Ascending aorta (tissue), 2 donors: ENCODE measurements at regions of chr6 and their contacts with region 1.

Region 1: GRCh38 chr6:43516697-43517504 is at the starts of genes POLR1C and YIPF3:
- DNase-seq: peak; percentile 89 to 98
- H3K4me3 ChIP-seq: peak within 1 kb of the TSS; percentile 81 to 95
- H3K27ac ChIP-seq: peak within 1 kb of the TSS; percentile 82 to 87
- H3K4me1 ChIP-seq: peaks cover 11 to 24% of the 10 kb centered on the region in 2 donors
- H3K27me3 ChIP-seq: no peaks in the 10 kb centered on the region
- CTCF ChIP-seq: no peak
- total RNA-seq, gene POLR1C: 51.5 TPM
- total RNA-seq, gene YIPF3: 71.4 TPM

Region 2: GRCh38 chr6:41920921-41921711 is 1595.8 kb before region 1 on chr6 and contains the starts of genes BYSL and MED20:
- intact Hi-C with region 1: loop called (anchors 10 kb)
- DNase-seq: peak; percentile 69 to 95
- H3K4me3 ChIP-seq: peak within 1 kb of the TSS; percentile 92 to 97
- H3K27ac ChIP-seq: peak within 1 kb of the TSS; percentile 98 to 99
- H3K4me1 ChIP-seq: peaks cover 8 to 19% of the 10 kb centered on the region in 2 donors
- H3K27me3 ChIP-seq: no peaks in the 10 kb centered on the region
- CTCF ChIP-seq: peak; percentile 94 to 97 (median 96)
- total RNA-seq, gene BYSL: 1.6 TPM
- total RNA-seq, gene MED20: 13.5 TPM

Region 3: GRCh38 chr6:42217519-42218367 is 1299.2 kb before region 1 on chr6 and contains the start of gene MRPS10:
- intact Hi-C with region 1: loop called (anchors 10 kb)
- DNase-seq: peak; percentile 66 to 96
- H3K4me3 ChIP-seq: peak within 1 kb of the TSS; percentile 59 to 80
- H3K27ac ChIP-seq: peak within 1 kb of the TSS; percentile 61 to 72
- H3K4me1 ChIP-seq: peaks cover 3 to 4% of the 10 kb centered on the region in 2 donors
- H3K27me3 ChIP-seq: no peaks in the 10 kb centered on the region
- CTCF ChIP-seq: no peak
- total RNA-seq, gene MRPS10: 5.4 TPM

Region 4: GRCh38 chr6:43174263-43175112 is 342.4 kb before region 1 on chr6:
- intact Hi-C with region 1: loop called (anchors 5 kb)
- DNase-seq: peak; percentile 98 to 99
- H3K4me3 ChIP-seq: peak overlapping the region; percentile 88 to 95
- H3K27ac ChIP-seq: peak overlapping the region; percentile 98
- H3K4me1 ChIP-seq: peaks cover 8 to 30% of the 10 kb centered on the region in 2 donors
- H3K27me3 ChIP-seq: no peaks in the 10 kb centered on the region
- CTCF ChIP-seq: peak in 1 of 3 experiments; percentile 16

Region 5: DNA sequence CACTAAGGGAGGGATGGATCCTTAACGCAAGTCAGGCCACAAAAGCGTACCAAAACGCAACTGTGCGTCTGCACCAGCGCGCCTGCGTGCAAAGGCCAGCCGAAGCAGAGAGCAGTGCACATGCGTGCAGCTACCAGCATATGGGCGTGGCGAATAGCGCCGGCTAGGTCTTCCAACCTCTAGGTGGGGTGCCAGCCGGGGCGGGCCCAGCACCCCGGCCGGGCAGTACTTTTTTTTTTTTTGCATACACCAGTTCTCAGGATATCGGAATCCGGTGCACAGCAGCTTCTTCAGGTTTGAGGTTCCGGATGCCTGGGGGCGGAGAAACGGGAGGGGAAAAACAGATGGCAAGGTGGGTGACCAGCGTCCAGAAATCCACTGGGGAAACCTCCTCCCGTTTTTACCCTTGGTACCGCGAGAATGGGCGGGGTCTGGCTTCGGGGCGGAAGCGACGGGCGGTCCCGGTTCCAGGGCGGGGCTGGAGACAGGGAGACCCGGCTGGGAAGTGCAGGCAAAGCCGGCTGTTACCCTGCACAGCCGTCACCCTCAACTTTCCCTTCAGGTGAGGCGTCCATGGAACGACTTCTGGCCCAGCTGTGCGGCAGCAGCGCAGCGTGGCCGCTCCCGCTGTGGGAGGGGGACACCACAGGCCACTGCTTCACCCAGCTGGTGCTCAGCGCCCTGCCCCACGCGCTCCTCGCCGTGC is 89.3 kb before region 1 on chr6 and contains the start of gene ABCC10:
- intact Hi-C with region 1: loop called (anchors 2 kb)
- DNase-seq: peak; percentile 72 to 96
- H3K4me3 ChIP-seq: peak within 1 kb of the TSS; percentile 79 to 89
- H3K27ac ChIP-seq: peak within 1 kb of the TSS; percentile 80 to 87
- H3K4me1 ChIP-seq: peaks cover 3 to 17% of the 10 kb centered on the region in 2 donors
- H3K27me3 ChIP-seq: no peaks in the 10 kb centered on the region
- CTCF ChIP-seq: peak in 2 of 3 experiments; percentile 40 to 44
- total RNA-seq, gene ABCC10: 4.6 TPM

Region 6: GRCh38 chr6:43477235-43478007 is 39.5 kb before region 1 on chr6 and contains the start of gene TJAP1:
- intact Hi-C with region 1: loop called (anchors 2 kb)
- DNase-seq: peak; percentile 70 to 95
- H3K4me3 ChIP-seq: peak within 1 kb of the TSS; percentile 65 to 99
- H3K27ac ChIP-seq: peak within 1 kb of the TSS; percentile 37 to 76
- H3K4me1 ChIP-seq: peaks cover 10 to 11% of the 10 kb centered on the region in 2 donors
- H3K27me3 ChIP-seq: no peaks in the 10 kb centered on the region
- CTCF ChIP-seq: no peak
- total RNA-seq, gene TJAP1: 71.6 TPM

Region 7: GRCh38 chr6:43575772-43576551 is 59.1 kb after region 1 on chr6 and contains the starts of genes POLH and XPO5:
- intact Hi-C with region 1: loop called (anchors 2 kb)
- DNase-seq: peak; percentile 58 to 93
- H3K4me3 ChIP-seq: peak within 1 kb of the TSS; percentile 69 to 75
- H3K27ac ChIP-seq: peak within 1 kb of the TSS; percentile 38 to 57
- H3K4me1 ChIP-seq: peaks cover 9 to 15% of the 10 kb centered on the region in 2 donors
- H3K27me3 ChIP-seq: no peaks in the 10 kb centered on the region
- CTCF ChIP-seq: peak in 1 of 3 experiments; percentile 17
- total RNA-seq, gene POLH: 4.3 TPM
- total RNA-seq, gene XPO5: 21.4 TPM